PC-3 (cell line): ENCODE measurements at regions of chr6 and their contacts with region 1.

Region 1: GRCh38 chr6:38225766-38226165 is 406.2 kb downstream of the ZFAND3 start:
- DNase-seq: no peak
- ATAC-seq: no peak
- H3K4me3 ChIP-seq: no peak overlapping the region
- H3K27ac ChIP-seq: no peak overlapping the region
- H3K4me1 ChIP-seq: peaks cover 2% of the 10 kb centered on the region
- H3K27me3 ChIP-seq: no peaks in the 10 kb centered on the region
- CTCF ChIP-seq: no peak

Region 2: GRCh38 chr6:38452816-38453660 is 227.3 kb after region 1 on chr6:
- CTCF ChIA-PET with region 1: no interaction called
- POLR2A ChIA-PET with region 1: interaction called, 10 read pairs
- intact Hi-C with region 1: no loop called
- DNase-seq: peak; percentile 37
- ATAC-seq: peak; percentile 89
- H3K4me3 ChIP-seq: no peak overlapping the region
- H3K27ac ChIP-seq: no peak overlapping the region
- H3K4me1 ChIP-seq: peaks cover 7% of the 10 kb centered on the region
- H3K27me3 ChIP-seq: no peaks in the 10 kb centered on the region
- CTCF ChIP-seq: no peak